ENCODE measurements at regions of chr7 and their contacts with region 1.

Region 1: DNA sequence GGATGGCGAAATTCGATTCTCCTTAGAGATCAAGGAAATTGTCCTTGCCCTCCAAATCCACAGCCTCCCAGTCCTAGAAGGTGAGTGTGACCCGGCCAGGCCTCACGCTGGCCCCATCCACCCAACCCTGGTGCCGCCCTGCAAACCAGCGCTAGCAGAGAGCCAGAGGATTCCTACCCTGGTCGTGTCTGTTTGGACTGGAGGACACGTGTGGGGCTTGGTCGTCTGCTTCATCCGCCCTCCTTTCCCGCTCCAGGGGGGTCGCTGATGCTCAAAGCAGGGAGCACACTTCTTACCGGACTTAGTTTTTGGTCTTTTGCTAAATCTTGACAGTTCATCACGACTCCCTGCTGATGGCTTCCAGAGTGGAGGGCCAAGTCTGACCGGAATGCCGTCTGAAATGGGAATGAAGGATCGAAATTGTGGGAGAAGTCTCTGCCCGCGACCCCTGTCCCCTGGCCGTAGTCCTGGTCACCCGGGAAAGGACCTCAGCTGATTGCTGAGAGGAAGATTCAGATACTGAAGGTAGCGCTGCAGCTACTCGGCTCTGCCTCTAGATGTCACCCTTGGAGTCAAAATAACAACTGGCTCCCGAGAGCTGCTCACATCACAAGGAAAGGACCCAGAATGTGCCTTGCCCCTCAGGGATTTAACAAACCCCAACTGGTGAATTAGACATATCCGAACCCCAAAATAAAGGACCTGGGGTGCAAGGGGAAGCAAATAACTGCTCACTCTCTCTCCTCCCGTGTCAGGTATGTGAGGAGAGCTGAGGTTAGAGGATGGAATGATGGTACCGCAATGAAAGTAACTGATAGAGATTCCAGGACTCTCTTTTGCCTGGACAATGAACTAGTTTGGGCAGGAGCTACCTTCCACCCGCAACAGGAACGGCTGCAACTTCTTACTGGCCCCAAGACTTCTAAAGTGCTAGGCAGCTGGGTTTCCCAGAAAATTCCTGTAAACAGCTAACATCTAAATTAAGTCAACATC is 23.5 kb upstream of the ORC5 start:
- DNase-seq: peak; percentile 47
- ATAC-seq: peak; percentile 98
- H3K4me3 ChIP-seq: no peak overlapping the region
- H3K27ac ChIP-seq: no peak overlapping the region
- H3K4me1 ChIP-seq: no peaks in the 10 kb centered on the region
- H3K27me3 ChIP-seq: no peaks in the 10 kb centered on the region
- CTCF ChIP-seq: peak; percentile 89
- EP300 ChIP-seq: no peak
- POLR2A ChIP-seq: no peak
- RAD21 ChIP-seq: peak; percentile 61

Region 2: DNA sequence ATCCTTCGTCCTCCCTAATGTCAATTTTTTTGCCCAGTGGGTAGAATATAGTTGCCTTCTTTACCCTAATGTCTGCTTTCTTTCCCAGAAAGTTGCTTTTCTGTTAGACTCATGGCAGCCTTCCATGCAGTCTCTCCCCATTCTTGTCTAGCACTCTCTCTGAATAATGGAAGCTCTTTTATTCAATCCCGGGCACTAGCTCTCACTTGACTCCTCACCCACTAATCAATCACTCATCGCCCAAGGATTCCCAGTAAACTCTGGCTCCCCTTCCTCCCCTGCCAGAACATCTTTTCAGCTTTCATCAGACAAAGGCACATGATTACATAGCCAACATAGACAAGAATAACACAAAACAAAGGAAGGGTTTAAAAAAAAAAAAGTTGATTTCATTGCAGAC is 141.7 kb before region 1 on chr7:
- CTCF ChIA-PET with region 1: no interaction called
- POLR2A ChIA-PET with region 1: no interaction called
- in situ Hi-C with region 1: no loop called
- intact Hi-C with region 1: no loop called
- DNase-seq: no peak
- ATAC-seq: no peak
- H3K4me3 ChIP-seq: no peak overlapping the region
- H3K27ac ChIP-seq: no peak overlapping the region
- H3K4me1 ChIP-seq: peaks cover 17% of the 10 kb centered on the region
- H3K27me3 ChIP-seq: no peaks in the 10 kb centered on the region
- CTCF ChIP-seq: no peak
- EP300 ChIP-seq: no peak
- POLR2A ChIP-seq: no peak
- RAD21 ChIP-seq: no peak

Region 3: DNA sequence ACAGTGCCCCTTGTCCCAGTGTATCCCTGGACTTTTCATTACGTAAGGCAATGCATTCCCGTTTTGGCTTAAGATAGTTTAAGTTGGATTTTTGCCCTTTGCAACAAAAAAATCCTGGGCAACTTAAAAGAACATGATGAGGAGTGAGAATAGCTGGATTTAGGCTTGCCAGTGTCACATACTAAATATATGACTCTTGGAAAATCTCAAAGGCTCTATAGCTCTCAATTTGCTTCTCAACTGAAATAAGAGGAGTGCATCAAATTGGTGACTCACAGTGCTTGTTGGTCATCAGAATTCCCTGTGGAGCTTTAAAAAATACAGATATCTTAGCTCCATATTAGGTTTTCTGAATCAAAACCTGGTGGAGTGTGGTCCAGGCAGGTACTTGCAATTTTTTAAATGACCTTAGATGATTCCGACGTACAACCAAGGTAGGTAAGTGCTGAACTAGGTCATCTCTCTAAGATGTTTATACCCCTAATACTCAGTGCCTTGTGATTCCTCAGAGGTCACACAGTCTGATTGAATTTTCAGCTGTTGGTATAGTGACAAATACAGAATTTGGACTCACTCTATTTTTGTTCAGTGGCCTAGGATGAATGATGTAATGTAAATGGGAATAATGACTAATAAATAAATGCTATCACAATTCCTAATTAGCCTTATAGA is 10.3 kb after region 1 on chr7:
- CTCF ChIA-PET with region 1: no interaction called
- POLR2A ChIA-PET with region 1: no interaction called
- in situ Hi-C with region 1: no loop called
- intact Hi-C with region 1: no loop called
- DNase-seq: no peak
- ATAC-seq: no peak
- H3K4me3 ChIP-seq: no peak overlapping the region
- H3K27ac ChIP-seq: no peak overlapping the region
- H3K4me1 ChIP-seq: no peaks in the 10 kb centered on the region
- H3K27me3 ChIP-seq: peaks cover 0 to 9% of the 10 kb centered on the region in 2 experiments; a peak in 2 of 5 replicates
- CTCF ChIP-seq: no peak
- EP300 ChIP-seq: no peak
- POLR2A ChIP-seq: no peak
- RAD21 ChIP-seq: no peak

Region 4: DNA sequence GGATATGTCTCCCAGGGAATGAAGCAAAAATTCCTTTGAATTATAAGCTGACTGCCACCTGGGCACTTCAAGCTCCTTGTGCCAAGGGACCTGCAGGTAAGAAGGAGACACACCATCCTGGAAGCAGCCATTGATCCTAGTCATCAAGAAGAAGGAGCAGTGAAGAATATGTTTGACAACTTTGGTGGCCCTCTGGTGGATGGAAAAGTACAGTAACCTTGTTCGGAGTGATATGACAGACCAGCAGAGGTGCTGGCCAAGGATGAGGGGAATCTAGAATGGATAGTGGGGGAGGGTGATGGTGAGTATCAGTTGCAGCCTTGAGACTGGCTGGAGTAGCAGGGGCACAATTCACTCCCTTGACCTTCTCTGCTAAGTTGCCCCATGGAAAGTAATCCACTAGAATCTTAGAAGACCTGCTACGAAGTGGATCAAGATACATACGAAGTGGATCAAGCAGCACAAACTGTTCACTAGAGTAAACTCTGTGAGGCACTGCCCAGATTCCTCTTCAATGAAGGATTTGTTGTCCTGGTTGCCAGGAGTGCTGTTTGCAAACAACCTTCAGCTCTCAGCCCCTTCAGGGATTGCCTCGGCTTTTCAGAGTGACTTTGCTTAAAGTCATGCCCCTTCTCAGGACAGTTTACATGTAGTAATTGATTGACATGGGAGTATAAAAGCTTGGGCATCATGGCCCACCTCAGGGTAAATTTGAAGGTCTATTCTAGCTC is 21.2 kb after region 1 on chr7:
- CTCF ChIA-PET with region 1: interaction called, 4 read pairs
- POLR2A ChIA-PET with region 1: no interaction called
- in situ Hi-C with region 1: no loop called
- intact Hi-C with region 1: loop called (anchors 1 kb)
- DNase-seq: peak; percentile 12
- ATAC-seq: peak; percentile 82
- H3K4me3 ChIP-seq: no peak overlapping the region
- H3K27ac ChIP-seq: no peak overlapping the region
- H3K4me1 ChIP-seq: no peaks in the 10 kb centered on the region
- H3K27me3 ChIP-seq: peaks cover 0 to 20% of the 10 kb centered on the region in 2 experiments; a peak in 2 of 5 replicates
- CTCF ChIP-seq: 0 out of 2 replicates have a peak, but pooled peaks have one; percentile 26
- EP300 ChIP-seq: no peak
- POLR2A ChIP-seq: no peak
- RAD21 ChIP-seq: no peak

Region 5: GRCh38 chr7:104267701-104268368 is 36.5 kb after region 1 on chr7:
- CTCF ChIA-PET with region 1: interaction called, 5 read pairs
- POLR2A ChIA-PET with region 1: no interaction called
- in situ Hi-C with region 1: no loop called
- intact Hi-C with region 1: loop called (anchors 1 kb)
- DNase-seq: peak; percentile 4
- ATAC-seq: no peak
- H3K4me3 ChIP-seq: no peak overlapping the region
- H3K27ac ChIP-seq: no peak overlapping the region
- H3K4me1 ChIP-seq: peaks cover 5% of the 10 kb centered on the region; the same call in 1 of the 2 replicates
- H3K27me3 ChIP-seq: no peaks in the 10 kb centered on the region
- CTCF ChIP-seq: peak; percentile 48
- EP300 ChIP-seq: no peak
- POLR2A ChIP-seq: no peak
- RAD21 ChIP-seq: no peak

Measured in HepG2 (cell line).